ENCODE measurements at regions of chr2 and their contacts with region 1.

Region 1: DNA sequence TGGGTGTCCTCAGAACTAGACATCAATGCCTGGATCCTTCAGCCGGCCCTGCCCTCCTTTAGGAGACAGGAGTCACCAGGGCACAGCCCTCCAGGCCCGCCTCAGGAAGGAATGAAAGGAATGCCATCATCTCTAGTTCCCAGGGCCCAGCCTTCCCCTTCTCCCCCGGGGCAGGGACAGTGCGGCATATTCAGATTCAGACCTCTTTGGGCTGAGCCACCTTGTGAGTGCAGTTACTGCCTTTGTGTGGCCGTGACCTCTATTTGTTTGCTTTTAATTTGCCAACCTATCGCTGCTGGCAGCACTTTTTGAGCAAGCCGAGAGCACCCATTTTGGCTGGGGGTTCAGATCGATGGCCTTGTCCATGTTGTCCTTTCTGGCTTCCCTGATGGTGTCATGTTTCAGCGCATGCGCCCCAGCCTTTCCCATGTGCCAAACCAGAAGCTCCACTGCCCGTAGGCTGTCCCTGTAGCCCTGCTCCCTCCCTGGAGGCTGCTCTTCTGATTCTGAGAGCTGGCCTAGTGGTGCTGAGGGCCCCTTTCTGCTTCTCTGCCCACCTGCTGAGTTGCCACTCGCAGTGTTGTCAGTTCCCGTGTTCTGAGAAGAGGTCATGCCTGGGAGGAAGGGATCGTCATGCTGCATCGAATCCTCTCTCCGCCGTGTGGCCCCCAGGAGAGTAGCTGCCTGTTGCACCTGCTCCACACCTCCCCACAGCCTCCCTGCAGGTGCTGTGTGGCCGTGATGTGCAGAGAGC is 10.9 kb downstream of the ANKRD23 start:
- DNase-seq: no peak
- ATAC-seq: no peak
- H3K4me3 Mint-ChIP-seq: no peak overlapping the region
- H3K27ac Mint-ChIP-seq: no peak overlapping the region
- H3K4me1 Mint-ChIP-seq: no peaks in the 10 kb centered on the region
- H3K27me3 Mint-ChIP-seq: no peaks in the 10 kb centered on the region

Region 2: GRCh38 chr2:95799892-95800291 is 1033.0 kb before region 1 on chr2:
- CTCF ChIA-PET with region 1: no interaction called
- POLR2A ChIA-PET with region 1: interaction called, 10 read pairs
- intact Hi-C with region 1: no loop called
- DNase-seq: no peak
- ATAC-seq: no peak
- H3K4me3 Mint-ChIP-seq: no peak overlapping the region
- H3K27ac Mint-ChIP-seq: no peak overlapping the region
- H3K4me1 Mint-ChIP-seq: no peaks in the 10 kb centered on the region
- H3K27me3 Mint-ChIP-seq: no peaks in the 10 kb centered on the region

Region 3: DNA sequence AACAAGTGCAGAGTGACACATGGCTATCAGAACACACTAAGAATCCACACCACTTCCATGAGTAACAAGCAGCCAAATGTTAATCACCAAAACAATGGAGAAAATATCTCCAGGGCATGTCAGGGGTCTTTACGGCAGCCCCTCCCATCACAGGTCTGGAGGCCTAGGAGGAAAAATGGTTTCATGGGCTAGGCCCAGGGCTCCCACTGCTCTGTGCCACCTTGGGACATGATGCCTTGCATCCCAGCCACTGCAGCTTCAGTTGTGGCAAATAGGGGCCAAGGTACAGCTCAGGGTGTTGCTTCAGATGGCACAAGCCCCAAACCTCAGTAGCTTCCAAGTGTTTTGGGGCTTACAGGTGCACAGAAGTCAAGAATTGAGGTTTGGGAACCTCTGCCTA is 394.3 kb before region 1 on chr2:
- CTCF ChIA-PET with region 1: no interaction called
- POLR2A ChIA-PET with region 1: no interaction called
- intact Hi-C with region 1: no loop called
- DNase-seq: no peak
- ATAC-seq: no peak
- H3K4me3 Mint-ChIP-seq: no peak overlapping the region
- H3K27ac Mint-ChIP-seq: no peak overlapping the region
- H3K4me1 Mint-ChIP-seq: peaks cover 4% of the 10 kb centered on the region
- H3K27me3 Mint-ChIP-seq: peaks cover 2% of the 10 kb centered on the region

Measured in activated CD4-positive, alpha-beta T cell treated with anti-CD3 and anti-CD28 coated beads for 36 hours (primary cell).